Mammary epithelial cell (primary cell): ENCODE measurements at regions of chr4 and their contacts with region 1.

Region 1: DNA sequence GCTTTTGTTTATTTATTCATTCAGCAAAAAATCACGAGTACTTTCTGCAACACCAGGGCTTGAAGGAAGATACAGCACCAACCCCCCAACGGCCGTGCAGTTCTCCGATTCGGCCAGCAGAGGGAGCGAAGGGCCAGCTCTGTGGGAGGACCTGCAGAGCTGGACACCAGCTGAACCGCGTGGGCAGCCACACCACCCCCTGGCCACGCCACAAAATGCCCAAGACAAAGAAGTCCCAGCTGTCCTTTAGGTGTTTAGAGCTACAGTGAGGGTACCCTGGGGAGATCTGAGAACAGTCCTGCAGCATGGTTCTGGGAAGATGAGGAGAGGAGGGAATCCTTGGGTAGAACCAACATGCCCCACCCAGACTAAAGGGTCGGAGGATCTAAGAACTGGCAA is 83.1 kb downstream of the RELL1 start:
- DNase-seq: peak; percentile 45
- H3K4me3 ChIP-seq: no peak overlapping the region
- H3K27ac ChIP-seq: no peak overlapping the region
- H3K4me1 ChIP-seq: peaks cover 7% of the 10 kb centered on the region
- H3K27me3 ChIP-seq: no peaks in the 10 kb centered on the region
- CTCF ChIP-seq: peak; percentile 90 to 97

Region 2: DNA sequence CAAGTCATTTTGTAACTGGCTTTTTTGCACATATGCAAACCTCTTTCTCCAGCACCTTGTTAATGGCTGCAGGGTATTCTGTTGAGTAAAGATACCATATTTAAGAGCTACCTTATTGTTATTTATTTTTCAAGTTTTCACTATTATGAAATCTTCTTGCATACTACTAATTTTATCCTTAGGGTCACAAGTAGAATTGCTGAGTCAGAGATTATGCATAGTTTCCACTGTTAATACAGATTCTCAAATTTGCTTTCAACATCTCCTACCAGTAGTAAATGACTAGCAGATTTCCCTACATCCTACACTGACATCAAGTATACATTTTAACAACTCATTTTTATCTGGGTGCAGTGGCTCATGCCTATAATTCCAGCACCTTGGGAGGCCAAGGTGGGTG is 29.5 kb before region 1 on chr4:
- CTCF ChIA-PET with region 1: no interaction called
- dilution Hi-C with region 1: no loop called
- in situ Hi-C with region 1: no loop called
- intact Hi-C with region 1: no loop called
- DNase-seq: no peak
- H3K4me3 ChIP-seq: no peak overlapping the region
- H3K27ac ChIP-seq: no peak overlapping the region
- H3K4me1 ChIP-seq: no peaks in the 10 kb centered on the region
- H3K27me3 ChIP-seq: no peaks in the 10 kb centered on the region
- CTCF ChIP-seq: no peak

Region 3: DNA sequence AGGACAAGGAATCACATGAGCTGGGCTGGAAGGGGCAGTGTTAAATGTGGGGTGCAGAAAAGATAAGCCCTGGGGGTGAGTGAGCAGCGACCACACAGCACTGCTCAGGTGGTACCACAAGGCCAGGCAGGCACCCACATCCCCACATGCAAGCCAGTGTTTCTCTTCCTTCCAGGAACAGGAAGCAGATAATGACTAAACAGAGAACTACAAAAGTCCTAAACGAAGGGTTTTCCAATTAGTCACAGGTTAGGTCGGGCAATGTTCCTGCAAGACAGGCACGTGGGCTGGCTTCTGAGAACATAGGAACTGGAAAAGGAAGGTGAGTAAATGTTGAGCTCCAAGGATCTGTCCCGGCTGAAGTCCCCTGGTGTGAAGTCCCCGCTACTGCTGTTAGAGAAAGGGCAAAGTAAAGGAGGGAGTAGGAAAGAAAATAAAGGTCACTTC is 63.6 kb after region 1 on chr4:
- CTCF ChIA-PET with region 1: no interaction called
- dilution Hi-C with region 1: no loop called
- in situ Hi-C with region 1: no loop called
- intact Hi-C with region 1: loop called (anchors 5 kb)
- DNase-seq: peak; percentile 92
- H3K4me3 ChIP-seq: no peak overlapping the region
- H3K27ac ChIP-seq: peak overlapping the region; percentile 47
- H3K4me1 ChIP-seq: peaks cover 40% of the 10 kb centered on the region
- H3K27me3 ChIP-seq: no peaks in the 10 kb centered on the region
- CTCF ChIP-seq: peak in 1 of 2 donors; percentile 21

Region 4: GRCh38 chr4:37686373-37687193 is 83.5 kb after region 1 on chr4 and contains the start of gene RELL1:
- CTCF ChIA-PET with region 1: no interaction called
- dilution Hi-C with region 1: no loop called
- in situ Hi-C with region 1: no loop called
- intact Hi-C with region 1: loop called (anchors 1 kb)
- DNase-seq: peak; percentile 99
- H3K4me3 ChIP-seq: peak within 1 kb of the TSS; percentile 73 to 98 (median 87)
- H3K27ac ChIP-seq: peak within 1 kb of the TSS; percentile 67
- H3K4me1 ChIP-seq: peaks cover 21% of the 10 kb centered on the region
- H3K27me3 ChIP-seq: no peaks in the 10 kb centered on the region
- CTCF ChIP-seq: no peak
- total RNA-seq, gene RELL1: 35.7 to 93.2 TPM

Region 5: DNA sequence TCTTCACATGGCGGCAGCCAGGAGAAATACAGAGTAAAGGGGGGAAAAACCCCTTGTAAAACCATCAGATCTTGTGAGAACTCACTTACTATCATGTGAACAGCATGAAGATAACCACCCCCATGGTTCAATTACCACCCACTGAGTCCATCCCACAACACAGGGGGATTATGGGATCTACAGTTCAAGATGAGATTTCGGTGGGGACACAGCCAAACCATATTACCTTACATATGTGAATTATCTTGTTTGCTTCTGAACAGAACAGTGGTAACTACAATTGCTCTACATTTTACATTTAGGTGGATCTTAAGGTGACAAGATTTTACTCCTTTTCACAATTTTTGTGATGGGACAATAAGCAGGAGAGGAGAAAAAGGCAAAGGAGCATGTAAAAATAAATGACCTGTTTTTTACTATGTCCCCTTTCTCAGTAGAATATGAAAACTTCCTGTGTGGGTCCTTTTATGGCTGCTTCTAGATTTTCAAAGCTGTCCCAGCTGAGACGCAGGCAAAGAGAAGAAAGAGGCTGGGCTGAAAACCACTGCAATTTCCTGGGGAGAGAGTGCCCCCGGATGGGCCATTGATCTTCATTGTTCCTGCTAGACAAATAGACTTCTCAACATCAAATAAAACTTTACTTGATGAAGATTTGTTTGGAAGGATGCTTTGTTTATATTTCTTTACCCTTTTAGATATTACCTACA is 177.5 kb after region 1 on chr4:
- CTCF ChIA-PET with region 1: interaction called, 5 read pairs
- dilution Hi-C with region 1: no loop called
- in situ Hi-C with region 1: loop called (anchors 5 to 10 kb)
- intact Hi-C with region 1: loop called (anchors 1 kb)
- DNase-seq: no peak
- H3K4me3 ChIP-seq: no peak overlapping the region
- H3K27ac ChIP-seq: no peak overlapping the region
- H3K4me1 ChIP-seq: no peaks in the 10 kb centered on the region
- H3K27me3 ChIP-seq: no peaks in the 10 kb centered on the region
- CTCF ChIP-seq: peak in 1 of 2 donors; percentile 27

Region 6: GRCh38 chr4:37793562-37793961 is 190.5 kb after region 1 on chr4:
- CTCF ChIA-PET with region 1: no interaction called
- dilution Hi-C with region 1: no loop called
- in situ Hi-C with region 1: loop called (anchors 5 to 10 kb)
- intact Hi-C with region 1: loop called (anchors 1 kb)
- DNase-seq: peak; percentile 3
- H3K4me3 ChIP-seq: no peak overlapping the region
- H3K27ac ChIP-seq: no peak overlapping the region
- H3K4me1 ChIP-seq: no peaks in the 10 kb centered on the region
- H3K27me3 ChIP-seq: peaks cover 3% of the 10 kb centered on the region
- CTCF ChIP-seq: peak; percentile 57 to 91

Region 7: GRCh38 chr4:37928426-37929416 is 325.7 kb after region 1 on chr4:
- CTCF ChIA-PET with region 1: no interaction called
- dilution Hi-C with region 1: no loop called
- in situ Hi-C with region 1: no loop called
- intact Hi-C with region 1: no loop called
- DNase-seq: no peak
- H3K4me3 ChIP-seq: no peak overlapping the region
- H3K27ac ChIP-seq: no peak overlapping the region
- H3K4me1 ChIP-seq: no peaks in the 10 kb centered on the region
- H3K27me3 ChIP-seq: no peaks in the 10 kb centered on the region
- CTCF ChIP-seq: no peak

Region 8: DNA sequence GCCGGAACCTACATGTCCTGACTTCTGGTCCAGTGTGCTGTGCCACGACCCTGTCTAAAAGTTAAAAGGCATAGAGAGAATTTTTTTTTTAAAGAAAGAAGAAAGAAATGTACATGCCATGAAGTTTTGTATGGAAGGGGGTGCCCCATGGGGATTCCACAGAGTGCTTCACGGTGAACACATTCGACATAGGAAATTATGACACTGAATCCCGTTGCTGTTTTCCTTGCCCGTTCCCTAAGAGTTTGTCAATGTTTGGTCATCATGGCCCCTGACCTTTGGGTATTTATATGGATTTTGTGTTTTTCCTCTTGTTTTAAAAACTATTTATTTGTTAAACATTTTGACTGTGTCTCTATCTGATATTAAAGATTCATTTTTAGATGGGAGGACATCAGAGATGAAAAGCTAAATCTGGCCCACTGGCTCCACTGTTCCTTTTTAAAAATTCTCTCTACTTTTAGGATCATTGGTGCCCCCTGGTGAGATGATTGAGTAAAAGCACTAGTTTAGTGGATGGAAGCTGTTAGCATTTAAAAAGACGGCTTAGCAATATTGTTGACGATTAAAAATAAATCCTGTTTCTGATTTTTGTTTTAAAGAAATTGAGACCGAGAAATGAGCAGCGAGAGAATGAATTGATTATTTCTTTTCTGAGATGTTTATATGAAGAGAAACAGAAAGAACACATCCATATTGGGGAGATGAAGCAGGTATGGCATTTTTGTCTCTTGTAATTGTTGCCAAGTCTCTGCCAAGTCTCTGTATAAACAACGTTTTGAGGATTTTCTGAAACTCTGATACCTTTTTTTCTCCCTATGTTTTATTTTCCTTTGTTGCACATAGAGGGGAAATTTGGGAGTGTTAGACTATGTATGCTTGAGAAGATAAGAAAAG is 432.2 kb after region 1 on chr4:
- CTCF ChIA-PET with region 1: no interaction called
- dilution Hi-C with region 1: no loop called
- in situ Hi-C with region 1: loop called (anchors 10 to 25 kb)
- intact Hi-C with region 1: loop called (anchors 1 kb)
- DNase-seq: peak; percentile 30
- H3K4me3 ChIP-seq: no peak overlapping the region
- H3K27ac ChIP-seq: no peak overlapping the region
- H3K4me1 ChIP-seq: no peaks in the 10 kb centered on the region
- H3K27me3 ChIP-seq: no peaks in the 10 kb centered on the region
- CTCF ChIP-seq: peak; percentile 59 to 63